ENCODE measurements at regions of chr6 and their contacts with region 1.

Region 1: DNA sequence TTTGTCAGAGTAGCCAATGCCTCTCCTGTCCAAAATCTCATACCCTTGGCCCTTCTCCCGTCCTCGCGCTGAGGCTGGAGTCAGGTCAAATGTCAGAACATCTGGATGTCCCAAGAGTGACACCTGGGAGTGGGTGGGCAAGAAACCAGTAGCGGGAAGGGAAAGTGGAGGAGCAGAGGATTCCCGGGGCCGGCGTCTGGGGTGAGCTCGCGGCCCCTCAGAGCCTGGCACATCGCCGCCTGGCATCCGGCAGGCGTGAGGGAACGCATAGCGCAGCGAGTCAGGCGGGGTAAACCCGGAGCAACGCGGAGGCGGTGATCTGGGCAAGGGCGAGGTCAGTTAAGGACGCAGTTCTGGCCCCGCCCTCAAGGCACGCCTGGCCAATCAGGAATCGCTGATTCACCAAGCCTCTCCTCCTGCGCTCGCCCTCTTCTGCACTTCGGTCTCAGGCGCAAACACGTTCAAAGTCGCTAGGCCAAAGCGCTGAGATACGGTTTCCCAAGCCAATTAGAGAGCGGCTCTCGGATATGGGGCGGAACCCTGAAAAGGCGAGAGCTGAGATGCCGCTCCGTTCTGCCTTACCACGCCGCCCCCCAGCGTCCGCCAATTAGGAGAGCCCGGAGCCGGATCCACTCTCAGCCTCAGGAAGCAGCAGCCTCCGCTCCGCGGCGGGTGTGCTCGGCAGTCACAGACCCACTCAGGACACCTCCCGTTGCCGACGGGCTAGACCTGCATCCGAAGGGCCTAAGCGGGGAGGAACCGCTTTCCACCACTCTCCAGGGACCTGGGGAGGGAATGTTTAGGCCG is 22.5 kb downstream of the VPS52 start:
- DNase-seq: peak; percentile 99
- H3K4me3 ChIP-seq: peak overlapping the region; percentile 43 to 77 (median 58)
- H3K4me3 Mint-ChIP-seq: peak overlapping the region; percentile 81 to 92
- H3K27ac ChIP-seq: peak overlapping the region; percentile 92 to 93
- H3K27ac Mint-ChIP-seq: peak overlapping the region; percentile 91 to 97 (median 96)
- H3K4me1 ChIP-seq: peaks cover 24 to 29% of the 10 kb centered on the region in 2 donors
- H3K4me1 Mint-ChIP-seq: peaks cover 32% of the 10 kb centered on the region
- H3K27me3 ChIP-seq: no peaks in the 10 kb centered on the region
- H3K27me3 Mint-ChIP-seq: peaks cover 7 to 13% (median 7%) of the 10 kb centered on the region in 3 donors
- CTCF ChIP-seq: no peak

Region 2: DNA sequence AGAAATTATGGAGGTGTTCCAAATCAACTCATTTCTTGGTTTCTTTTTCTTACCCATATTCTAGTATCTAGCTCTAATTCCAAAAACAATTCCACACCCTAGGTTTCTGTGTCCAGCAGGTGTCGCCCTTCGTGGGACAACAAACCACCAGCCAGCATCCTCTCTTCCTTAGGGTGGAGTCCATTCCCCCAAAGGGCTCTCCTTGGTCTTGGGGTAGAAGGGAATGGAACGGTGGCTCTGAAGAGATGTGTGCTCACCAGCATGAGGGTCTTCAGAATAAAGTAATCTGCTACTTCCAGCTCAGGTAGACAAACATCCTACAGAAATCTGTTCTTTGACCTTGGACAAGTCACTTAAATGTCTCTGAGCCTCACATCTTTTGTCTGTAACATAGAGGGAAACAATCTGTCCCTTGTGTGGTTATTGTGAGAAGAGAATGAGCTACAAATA is 315.5 kb before region 1 on chr6:
- intact Hi-C with region 1: loop called in 1 of 2 experiments (anchors 10 kb)
- DNase-seq: peak; percentile 58 to 78 (median 76)
- H3K4me3 ChIP-seq: no peak overlapping the region
- H3K4me3 Mint-ChIP-seq: no peak overlapping the region
- H3K27ac ChIP-seq: peak overlapping the region in 1 of 2 donors; percentile 5
- H3K27ac Mint-ChIP-seq: peak overlapping the region in 5 of 7 donors; percentile 22 to 79 (median 37)
- H3K4me1 ChIP-seq: peaks cover 61 to 68% of the 10 kb centered on the region in 2 donors
- H3K4me1 Mint-ChIP-seq: peaks cover 75% of the 10 kb centered on the region
- H3K27me3 ChIP-seq: no peaks in the 10 kb centered on the region
- H3K27me3 Mint-ChIP-seq: peaks cover 0 to 1% (median 1%) of the 10 kb centered on the region in 3 donors
- CTCF ChIP-seq: peak; percentile 88

Region 3: DNA sequence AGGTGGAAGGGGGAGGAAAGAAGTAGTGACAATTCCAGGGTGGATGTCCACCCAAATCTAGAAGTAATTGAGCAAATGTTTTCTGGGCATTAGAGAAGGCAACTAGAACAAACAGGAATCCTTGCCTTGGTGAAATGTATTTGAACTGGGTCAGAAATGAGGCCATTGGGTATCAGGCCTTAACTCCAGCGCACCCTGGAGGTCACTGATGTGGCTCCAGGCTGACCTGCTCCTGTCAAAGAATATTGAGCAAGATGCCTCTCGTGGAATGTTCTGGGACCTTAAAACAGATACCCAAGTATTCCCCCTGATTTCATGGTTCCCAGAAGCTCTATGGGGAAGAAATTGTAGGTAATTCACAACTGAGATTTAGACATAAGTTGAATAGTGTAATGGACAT is 166.4 kb before region 1 on chr6:
- intact Hi-C with region 1: loop called in 1 of 2 experiments (anchors 10 kb)
- DNase-seq: peak; percentile 63 to 79 (median 64)
- H3K4me3 ChIP-seq: no peak overlapping the region
- H3K4me3 Mint-ChIP-seq: no peak overlapping the region
- H3K27ac ChIP-seq: no peak overlapping the region
- H3K27ac Mint-ChIP-seq: peak overlapping the region; percentile 38 to 75 (median 73)
- H3K4me1 ChIP-seq: peaks cover 41 to 44% of the 10 kb centered on the region in 2 donors
- H3K4me1 Mint-ChIP-seq: peaks cover 50% of the 10 kb centered on the region
- H3K27me3 ChIP-seq: no peaks in the 10 kb centered on the region
- H3K27me3 Mint-ChIP-seq: peaks cover 0 to 4% (median 3%) of the 10 kb centered on the region in 3 donors
- CTCF ChIP-seq: peak; percentile 68

Region 4: GRCh38 chr6:33123732-33124524 is 125.2 kb before region 1 on chr6:
- intact Hi-C with region 1: loop called (anchors 5 kb)
- DNase-seq: peak; percentile 28 to 32 (median 32)
- H3K4me3 ChIP-seq: no peak overlapping the region
- H3K4me3 Mint-ChIP-seq: no peak overlapping the region
- H3K27ac ChIP-seq: no peak overlapping the region
- H3K27ac Mint-ChIP-seq: no peak overlapping the region
- H3K4me1 ChIP-seq: no peaks in the 10 kb centered on the region
- H3K4me1 Mint-ChIP-seq: no peaks in the 10 kb centered on the region
- H3K27me3 ChIP-seq: no peaks in the 10 kb centered on the region
- H3K27me3 Mint-ChIP-seq: peaks cover 5 to 15% (median 6%) of the 10 kb centered on the region in 3 donors
- CTCF ChIP-seq: peak; percentile 70

Region 5: DNA sequence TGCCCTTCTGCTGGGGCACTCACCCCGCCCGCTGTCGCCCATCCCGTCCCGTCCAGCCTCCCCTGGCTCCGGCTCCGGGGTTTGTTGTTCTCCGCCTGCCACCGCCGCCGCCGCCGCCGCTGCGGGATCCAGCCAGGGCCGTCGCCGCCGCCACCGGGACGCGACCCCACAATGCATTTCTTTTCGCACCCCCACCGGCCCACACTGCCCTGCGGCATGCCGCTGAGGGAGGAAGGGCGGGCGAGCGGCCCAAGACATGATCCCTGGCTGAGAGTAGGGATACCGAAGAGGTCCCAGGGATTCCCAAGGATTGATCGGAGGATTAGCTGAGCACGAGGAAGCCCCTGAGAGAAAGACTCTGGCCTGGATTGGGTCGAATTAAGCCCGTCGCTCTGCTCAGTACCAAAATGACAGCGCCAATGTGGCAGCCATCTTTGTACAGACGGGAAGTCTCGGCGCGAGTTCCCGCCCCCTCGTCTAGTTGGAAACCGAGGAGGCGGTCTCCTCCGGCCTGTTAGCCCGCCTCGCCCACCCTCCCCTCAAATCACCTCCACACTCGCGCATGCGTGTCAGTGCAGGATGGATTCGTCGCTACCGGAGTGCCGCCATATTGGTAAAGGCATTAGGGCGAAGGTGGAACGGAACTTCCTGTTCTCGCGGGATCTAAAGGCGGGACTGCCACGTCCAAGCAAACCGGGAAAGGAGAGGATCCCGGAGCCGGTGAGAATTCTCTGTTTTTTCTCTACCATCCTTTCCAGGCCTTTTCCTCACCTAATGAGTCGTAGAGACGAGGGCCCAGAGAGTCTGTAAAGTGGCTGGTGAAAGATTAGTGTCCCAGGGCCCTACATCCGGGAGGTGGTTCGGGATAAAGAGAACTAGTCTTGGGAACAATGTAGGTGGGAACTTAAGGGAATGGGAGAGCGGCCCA is 48.6 kb before region 1 on chr6 and contains the starts of genes RXRB and SLC39A7:
- intact Hi-C with region 1: loop called (anchors 2 to 10 kb)
- DNase-seq: peak; percentile 99
- H3K4me3 ChIP-seq: peak within 1 kb of the TSS; percentile 83 to 96 (median 95)
- H3K4me3 Mint-ChIP-seq: peak within 1 kb of the TSS; percentile 94 to 96
- H3K27ac ChIP-seq: peak within 1 kb of the TSS; percentile 94
- H3K27ac Mint-ChIP-seq: peak within 1 kb of the TSS; percentile 95 to 99 (median 97)
- H3K4me1 ChIP-seq: peaks cover 40 to 53% of the 10 kb centered on the region in 2 donors
- H3K4me1 Mint-ChIP-seq: peaks cover 60% of the 10 kb centered on the region
- H3K27me3 ChIP-seq: no peaks in the 10 kb centered on the region
- H3K27me3 Mint-ChIP-seq: peaks cover 0 to 5% (median 0%) of the 10 kb centered on the region in 3 donors
- CTCF ChIP-seq: no peak
- polyA plus RNA-seq, gene RXRB: 4.5 to 74.5 (median 5.1) TPM
- polyA plus RNA-seq, gene SLC39A7: 14.5 to 32.7 (median 17.7) TPM

Measured in CD14-positive monocyte (primary cell).